ENCODE measurements at regions of chr14 and their contacts with region 1.

Region 1: DNA sequence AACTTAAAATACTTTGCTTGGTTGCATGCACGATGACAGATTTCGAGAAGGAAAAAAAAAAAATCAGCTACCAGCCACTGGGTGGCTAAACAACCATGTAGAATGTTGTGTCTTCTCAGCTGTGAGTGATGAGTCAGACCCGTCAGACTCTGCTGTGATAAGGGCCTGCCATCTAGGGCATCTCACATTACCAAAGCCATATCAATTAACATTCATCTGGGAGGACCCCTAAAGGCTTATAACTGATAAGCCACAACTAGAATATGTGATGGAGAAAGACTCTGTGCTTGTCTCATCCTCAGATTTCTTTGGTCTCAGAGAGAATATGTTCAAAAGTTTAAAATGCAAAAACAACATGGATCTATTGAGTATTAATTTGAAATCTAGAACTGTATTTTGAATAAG is 111.5 kb downstream of the PAX9 start:
- DNase-seq: peak; percentile 18 to 57
- H3K4me3 ChIP-seq: no peak overlapping the region
- H3K27ac ChIP-seq: no peak overlapping the region
- H3K4me1 ChIP-seq: peaks cover 47% of the 10 kb centered on the region
- H3K27me3 ChIP-seq: no peaks in the 10 kb centered on the region
- CTCF ChIP-seq: peak; percentile 28; the same call in 1 of the 2 replicates

Region 2: GRCh38 chr14:36690301-36691033 is 82.7 kb before region 1 on chr14:
- CTCF ChIA-PET with region 1: no interaction called
- POLR2A ChIA-PET with region 1: no interaction called
- intact Hi-C with region 1: no loop called
- DNase-seq: peak; percentile 16 to 61
- H3K4me3 ChIP-seq: no peak overlapping the region
- H3K27ac ChIP-seq: no peak overlapping the region
- H3K4me1 ChIP-seq: no peaks in the 10 kb centered on the region; the same call in 1 of the 2 replicates
- H3K27me3 ChIP-seq: no peaks in the 10 kb centered on the region
- CTCF ChIP-seq: no peak

Region 3: GRCh38 chr14:36936013-36936678 is 163.0 kb after region 1 on chr14:
- CTCF ChIA-PET with region 1: interaction called, 18 read pairs
- POLR2A ChIA-PET with region 1: no interaction called
- intact Hi-C with region 1: loop called (anchors 5 kb)
- DNase-seq: peak; percentile 3 to 70
- H3K4me3 ChIP-seq: no peak overlapping the region
- H3K27ac ChIP-seq: peak overlapping the region; percentile 32; the same call in 1 of the 2 replicates
- H3K4me1 ChIP-seq: peaks cover 12% of the 10 kb centered on the region
- H3K27me3 ChIP-seq: no peaks in the 10 kb centered on the region
- CTCF ChIP-seq: no peak